OCI-LY7 (cell line): ENCODE measurements at regions of chr9 and their contacts with region 1.

Region 1: GRCh38 chr9:137200311-137201204 is at the start of gene TPRN:
- DNase-seq: peak; percentile 100
- H3K4me3 ChIP-seq: peak within 1 kb of the TSS; percentile 76
- H3K27ac ChIP-seq: peak within 1 kb of the TSS; percentile 49
- H3K4me1 ChIP-seq: peaks cover 33% of the 10 kb centered on the region
- CTCF ChIP-seq: no peak
- total RNA-seq, gene TPRN: 9.0 and 10.3 TPM in 2 replicates

Region 2: DNA sequence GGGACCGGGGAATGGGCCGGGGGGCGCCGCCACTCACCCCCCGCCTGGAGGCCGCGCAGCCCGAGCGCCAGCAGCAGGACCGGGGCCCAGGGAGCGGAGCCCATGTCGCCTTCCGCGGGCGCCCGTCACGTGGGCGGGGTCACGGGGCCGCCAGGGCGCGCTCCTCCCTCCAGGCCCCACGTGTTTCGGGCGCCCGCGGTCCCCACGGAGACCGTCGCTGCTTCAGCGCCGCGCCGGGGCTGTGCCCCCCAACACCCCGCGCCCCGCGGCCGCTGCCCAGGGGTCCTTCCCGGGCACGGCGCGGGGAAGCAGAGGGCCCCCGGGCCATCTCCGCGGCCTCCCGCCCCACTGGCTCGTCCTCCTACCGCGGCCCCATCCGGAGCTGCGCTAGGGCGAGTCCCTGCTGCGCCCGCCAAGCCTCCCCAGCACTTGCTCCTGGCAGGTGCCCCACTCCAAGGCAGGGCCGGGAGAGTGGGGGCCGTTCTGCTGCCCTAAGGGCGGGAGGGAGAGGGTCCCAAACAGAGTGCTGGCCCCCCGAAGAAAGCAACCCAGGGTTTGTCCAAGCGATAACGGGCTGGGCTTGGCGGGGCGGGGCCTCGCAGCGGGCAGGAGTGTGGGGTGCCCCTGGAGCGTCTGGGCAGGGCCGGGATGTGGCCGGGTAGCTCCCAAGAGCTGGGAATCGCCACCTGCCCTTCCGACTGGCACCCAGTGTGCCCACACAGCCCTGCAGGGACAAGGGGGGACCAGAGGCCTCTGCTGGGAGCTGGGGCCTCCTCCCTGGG is 85.8 kb before region 1 on chr9 and contains the start of gene DPP7:
- CTCF ChIA-PET with region 1: no interaction called
- POLR2A ChIA-PET with region 1: no interaction called
- intact Hi-C with region 1: loop called (anchors 1 kb)
- DNase-seq: peak; percentile 82
- H3K4me3 ChIP-seq: peak within 1 kb of the TSS; percentile 95
- H3K27ac ChIP-seq: peak within 1 kb of the TSS; percentile 42
- H3K4me1 ChIP-seq: peaks cover 34% of the 10 kb centered on the region
- CTCF ChIP-seq: no peak
- total RNA-seq, gene DPP7: 173 and 182 TPM in 2 replicates

Region 3: DNA sequence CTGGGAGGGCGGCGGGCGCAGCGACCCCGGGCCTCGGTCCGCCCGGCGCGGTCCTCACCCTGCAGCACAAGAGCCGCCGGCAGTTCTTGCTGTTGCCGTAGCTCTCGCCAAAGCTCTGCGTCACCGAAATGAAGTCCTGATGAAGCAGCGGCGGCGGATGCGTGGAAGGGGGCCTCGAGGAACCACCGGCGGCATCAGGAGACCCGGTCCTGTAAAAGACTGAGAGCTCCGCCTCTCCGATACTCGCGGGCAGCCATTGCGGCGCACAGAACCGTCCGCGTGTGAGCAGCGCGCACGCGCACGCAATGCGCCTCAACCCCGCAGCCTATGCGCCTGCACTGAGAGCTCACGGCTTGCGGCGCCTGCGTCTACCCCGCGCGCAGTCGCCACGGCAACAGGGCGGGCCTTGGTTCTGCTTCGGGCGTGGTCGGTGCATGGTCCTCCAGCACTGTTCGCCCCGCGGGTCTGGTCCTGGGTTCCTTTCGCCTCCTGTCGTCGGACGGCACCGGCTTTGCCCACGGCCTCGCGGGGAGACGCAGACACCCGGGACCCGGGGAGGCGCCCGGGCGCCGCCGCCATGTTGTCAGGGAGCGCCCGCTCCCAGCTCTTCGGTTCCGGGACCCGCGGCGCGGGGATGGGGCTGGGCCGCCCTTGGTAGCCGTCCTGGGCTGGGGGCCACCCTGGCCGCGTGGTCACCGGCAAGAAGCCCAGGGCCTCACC is 70.9 kb before region 1 on chr9:
- CTCF ChIA-PET with region 1: no interaction called
- POLR2A ChIA-PET with region 1: interaction called, 5 read pairs
- intact Hi-C with region 1: loop called (anchors 2 kb)
- DNase-seq: peak; percentile 94
- H3K4me3 ChIP-seq: peak overlapping the region; percentile 94
- H3K27ac ChIP-seq: peak overlapping the region; percentile 92
- H3K4me1 ChIP-seq: peaks cover 35% of the 10 kb centered on the region
- CTCF ChIP-seq: no peak

Region 4: DNA sequence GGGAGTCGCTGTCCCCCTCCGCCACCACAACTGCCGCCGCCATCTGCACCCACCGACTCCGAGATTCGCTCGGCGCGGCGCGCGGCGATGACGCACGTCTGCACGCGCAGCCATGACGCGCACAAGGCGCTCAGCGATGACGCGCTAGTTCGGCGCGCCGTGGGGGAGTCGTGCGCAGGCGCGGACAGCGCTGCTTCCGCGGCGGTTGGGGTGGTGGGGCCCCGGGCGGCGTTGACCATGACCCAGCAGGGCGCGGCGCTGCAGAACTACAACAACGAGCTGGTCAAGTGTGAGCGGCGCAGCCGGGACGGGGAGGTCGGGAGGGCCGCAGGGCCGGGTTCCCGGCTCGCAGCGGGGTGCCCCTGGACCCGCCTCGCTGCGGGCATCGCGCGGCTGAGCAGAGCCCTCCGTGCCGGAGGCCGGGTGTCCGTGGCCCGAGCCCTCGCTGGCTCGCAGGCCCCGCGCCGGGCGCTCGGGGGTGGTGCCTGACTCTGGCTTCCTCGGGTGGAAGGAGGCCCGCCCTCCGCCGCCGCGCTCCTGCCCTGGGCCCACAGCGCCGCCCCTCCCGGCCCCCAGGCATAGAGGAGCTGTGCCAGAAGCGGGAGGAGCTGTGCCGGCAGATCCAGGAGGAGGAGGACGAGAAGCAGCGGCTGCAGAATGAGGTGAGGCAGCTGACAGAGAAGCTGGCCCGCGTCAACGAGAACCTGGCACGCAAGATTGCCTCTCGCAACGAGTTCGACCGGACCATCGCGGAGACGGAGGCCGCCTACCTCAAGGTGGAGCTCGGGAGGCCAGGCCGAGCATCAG is 11.9 kb before region 1 on chr9 and contains the starts of genes ANAPC2 and SSNA1:
- CTCF ChIA-PET with region 1: interaction called, 4 read pairs
- POLR2A ChIA-PET with region 1: interaction called, 16 read pairs
- intact Hi-C with region 1: no loop called
- DNase-seq: peak; percentile 98
- H3K4me3 ChIP-seq: peak within 1 kb of the TSS; percentile 94
- H3K27ac ChIP-seq: peak within 1 kb of the TSS; percentile 92
- H3K4me1 ChIP-seq: peaks cover 27% of the 10 kb centered on the region
- CTCF ChIP-seq: peak; percentile 69
- total RNA-seq, gene ANAPC2: 34.8 and 38.6 TPM in 2 replicates
- total RNA-seq, gene SSNA1: 111 and 130 TPM in 2 replicates

Region 5: DNA sequence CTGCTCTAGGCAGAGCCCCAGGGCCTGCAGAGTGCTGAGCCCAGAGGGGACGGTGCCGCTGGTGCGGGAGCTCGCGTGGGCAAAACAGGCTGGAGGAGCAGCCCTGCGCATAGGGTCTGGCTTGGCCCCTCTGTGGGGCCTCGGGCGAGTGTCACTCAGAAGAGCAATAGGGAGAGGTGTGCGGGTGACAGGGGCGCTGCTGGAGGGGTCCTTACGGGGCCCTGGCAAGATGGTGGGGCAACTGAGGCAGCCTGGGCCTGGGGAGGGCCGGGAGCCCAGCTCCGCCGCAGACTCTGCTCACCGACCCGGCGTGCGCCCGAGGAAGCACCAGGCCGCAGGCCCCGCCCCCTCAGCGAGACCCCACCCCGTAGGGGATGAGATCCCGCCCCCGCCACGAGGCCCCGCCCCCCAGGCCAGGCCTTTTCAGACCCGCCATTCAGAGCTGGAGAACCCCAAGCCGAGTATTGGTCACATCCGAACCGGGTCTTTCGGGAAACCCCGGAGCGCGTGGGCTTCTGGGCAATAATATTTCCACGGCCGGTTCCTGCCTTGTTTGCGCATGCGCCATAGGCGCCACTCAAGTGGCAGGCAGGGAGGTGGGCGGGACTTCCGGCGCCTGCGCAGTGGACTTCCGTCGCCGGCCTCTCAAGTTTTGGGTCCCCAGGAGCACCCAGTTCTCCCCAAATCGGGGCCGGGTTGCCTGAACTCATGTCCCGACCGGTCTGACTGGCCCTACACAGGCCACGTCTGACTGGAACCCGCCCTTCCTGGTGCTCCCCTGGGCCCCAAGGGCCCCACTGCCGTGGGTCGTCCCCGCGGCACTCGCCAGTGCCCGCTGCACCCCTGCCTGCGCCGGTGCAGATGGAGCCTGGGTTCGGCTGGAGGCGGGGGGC is 22.8 kb after region 1 on chr9:
- CTCF ChIA-PET with region 1: interaction called, 5 read pairs
- POLR2A ChIA-PET with region 1: interaction called, 6 read pairs
- intact Hi-C with region 1: loop called (anchors 1 kb)
- DNase-seq: peak; percentile 100
- H3K4me3 ChIP-seq: peak overlapping the region; percentile 91
- H3K27ac ChIP-seq: peak overlapping the region; percentile 65
- H3K4me1 ChIP-seq: peaks cover 26% of the 10 kb centered on the region
- CTCF ChIP-seq: no peak

Region 6: GRCh38 chr9:137252555-137253506 is 52.3 kb after region 1 on chr9:
- CTCF ChIA-PET with region 1: no interaction called
- POLR2A ChIA-PET with region 1: no interaction called
- intact Hi-C with region 1: no loop called
- DNase-seq: peak; percentile 76
- H3K4me3 ChIP-seq: peak overlapping the region; percentile 98
- H3K27ac ChIP-seq: peak overlapping the region; percentile 58
- H3K4me1 ChIP-seq: peaks cover 43% of the 10 kb centered on the region
- CTCF ChIP-seq: no peak

Region 7: GRCh38 chr9:137269231-137269772 is 68.7 kb after region 1 on chr9:
- CTCF ChIA-PET with region 1: no interaction called
- POLR2A ChIA-PET with region 1: no interaction called
- intact Hi-C with region 1: loop called (anchors 1 kb)
- DNase-seq: peak; percentile 82
- H3K4me3 ChIP-seq: peak overlapping the region; percentile 65
- H3K27ac ChIP-seq: peak overlapping the region; percentile 90
- H3K4me1 ChIP-seq: peaks cover 61% of the 10 kb centered on the region
- CTCF ChIP-seq: no peak

Region 8: GRCh38 chr9:137731216-137731946 is 530.8 kb after region 1 on chr9:
- CTCF ChIA-PET with region 1: no interaction called
- POLR2A ChIA-PET with region 1: no interaction called
- intact Hi-C with region 1: no loop called
- DNase-seq: no peak
- H3K4me3 ChIP-seq: no peak overlapping the region
- H3K27ac ChIP-seq: no peak overlapping the region
- H3K4me1 ChIP-seq: peaks cover 3% of the 10 kb centered on the region
- CTCF ChIP-seq: no peak